SK-N-SH (cell line): ENCODE measurements at regions of chr15 and their contacts with region 1.

Region 1: DNA sequence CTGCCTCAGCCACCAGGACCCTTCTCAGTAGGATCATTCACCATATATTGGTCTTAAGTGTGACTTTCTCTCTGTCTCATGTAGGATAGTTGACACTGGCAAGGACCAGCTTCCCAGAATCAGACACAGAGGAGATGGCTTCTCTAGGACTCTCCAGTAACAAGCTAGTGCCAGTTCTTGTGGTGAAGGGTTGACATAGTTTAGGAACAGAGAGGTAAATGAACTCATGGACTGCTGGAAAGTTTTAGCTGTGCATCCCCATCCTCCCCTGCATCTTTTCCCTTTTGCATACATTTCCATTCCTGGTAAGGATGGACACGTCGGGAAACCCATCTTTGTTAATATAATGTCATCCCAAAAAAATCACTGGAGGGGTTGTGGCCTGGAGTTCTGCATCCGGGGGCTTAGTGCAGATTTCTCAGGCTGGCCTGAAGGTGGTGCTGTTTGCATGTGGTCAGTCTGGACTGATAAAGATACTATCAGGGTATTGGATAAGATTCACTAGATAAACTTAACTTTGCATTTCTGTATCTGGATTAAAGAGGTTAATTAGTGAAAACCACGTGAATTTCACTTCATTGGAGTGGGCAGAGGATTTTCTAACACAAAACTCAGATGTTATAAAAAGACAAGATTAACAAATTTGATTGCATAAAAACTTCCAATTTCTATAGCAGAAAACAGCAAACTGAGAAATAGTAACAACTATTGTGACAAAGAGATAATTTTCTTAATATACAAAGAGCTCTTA is 110.8 kb downstream of the TBC1D2B start:
- DNase-seq: peak; percentile 78
- H3K4me3 ChIP-seq: no peak overlapping the region; a peak in 1 of 4 replicates
- H3K27ac ChIP-seq: no peak overlapping the region
- H3K4me1 ChIP-seq: no peaks in the 10 kb centered on the region; a peak in 1 of 4 replicates
- H3K27me3 ChIP-seq: no peaks in the 10 kb centered on the region; the same call in 1 of the 2 replicates
- CTCF ChIP-seq: peak; percentile 94
- EP300 ChIP-seq: no peak
- RAD21 ChIP-seq: peak; percentile 96

Region 2: DNA sequence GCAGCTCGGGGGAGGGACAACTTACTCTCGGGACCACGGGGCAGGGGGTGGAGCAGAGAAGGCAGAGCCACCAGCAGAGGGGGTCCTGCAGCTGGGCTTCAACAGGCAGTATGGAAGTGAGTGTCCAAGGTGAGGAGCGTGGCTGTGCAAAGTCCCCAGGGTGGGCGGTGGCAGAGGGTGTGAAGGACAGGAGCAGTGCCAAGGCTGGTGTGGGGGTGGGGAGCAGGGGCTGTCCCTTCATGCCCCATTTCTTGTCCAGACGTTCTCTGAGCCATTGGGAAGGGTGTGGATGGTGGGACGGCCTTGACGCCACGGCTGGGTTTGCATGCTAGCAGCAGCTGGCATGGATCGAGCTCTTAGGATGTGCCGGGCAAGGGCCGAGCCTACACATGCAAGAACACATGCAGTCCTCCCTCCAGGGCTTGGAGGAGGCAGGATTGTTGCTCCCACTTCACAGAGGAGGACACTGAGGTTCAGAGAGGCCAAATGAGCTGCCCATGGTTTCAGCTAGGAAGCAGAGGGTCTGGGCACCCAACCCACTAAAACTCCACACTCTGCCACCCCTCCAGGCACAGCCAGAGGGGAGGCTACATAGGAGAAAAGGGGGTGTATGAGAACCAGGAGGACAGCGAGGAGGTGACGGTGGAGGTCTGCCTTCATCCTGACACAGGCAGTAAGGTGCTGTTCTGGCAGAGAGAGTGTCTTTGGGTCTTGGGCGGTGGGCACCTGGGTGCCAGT is 17.2 kb after region 1 on chr15:
- CTCF ChIA-PET with region 1: interaction called, 10 read pairs
- POLR2A ChIA-PET with region 1: no interaction called
- DNase-seq: no peak
- H3K4me3 ChIP-seq: no peak overlapping the region
- H3K27ac ChIP-seq: no peak overlapping the region
- H3K4me1 ChIP-seq: peaks cover 0 to 43% of the 10 kb centered on the region in 2 experiments; a peak in 1 of 4 replicates
- H3K27me3 ChIP-seq: no peaks in the 10 kb centered on the region
- CTCF ChIP-seq: no peak
- EP300 ChIP-seq: no peak
- RAD21 ChIP-seq: peak; percentile 43

Region 3: DNA sequence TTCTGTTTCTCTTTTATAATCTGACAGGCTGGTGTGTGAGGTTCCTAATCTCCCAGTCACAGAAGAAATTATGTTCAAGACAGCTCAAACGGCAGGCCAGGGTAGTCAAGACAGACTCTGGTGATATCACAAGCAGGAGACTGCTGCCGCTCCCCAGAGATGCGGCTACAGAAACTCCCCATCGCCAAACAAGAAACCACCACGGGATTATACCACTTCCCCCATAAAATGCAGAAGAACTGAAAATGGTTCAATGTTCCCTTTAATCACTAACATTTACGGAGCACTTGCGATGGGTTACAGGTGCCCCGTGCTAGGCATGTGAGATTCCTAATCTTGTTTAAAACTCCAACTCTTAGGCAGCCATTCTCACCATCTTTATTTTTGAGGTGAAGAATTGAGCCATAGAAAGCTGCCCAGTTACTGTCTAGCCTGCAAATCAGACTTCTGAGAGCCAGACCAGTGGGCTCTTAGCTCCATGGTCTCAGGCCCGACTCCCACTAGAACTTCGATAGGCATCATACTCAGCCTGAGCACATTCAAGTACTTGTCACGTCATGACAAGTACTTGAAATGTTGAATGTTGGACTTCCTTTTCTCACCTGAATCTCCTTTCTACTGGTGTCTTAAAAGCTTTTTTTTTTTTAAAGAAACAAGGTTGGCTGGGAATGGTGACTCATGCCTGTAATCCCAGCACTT is 52.4 kb after region 1 on chr15:
- CTCF ChIA-PET with region 1: interaction called, 10 read pairs
- POLR2A ChIA-PET with region 1: no interaction called
- DNase-seq: no peak
- H3K4me3 ChIP-seq: no peak overlapping the region
- H3K27ac ChIP-seq: no peak overlapping the region
- H3K4me1 ChIP-seq: peaks cover 0 to 14% of the 10 kb centered on the region in 2 experiments; a peak in 2 of 4 replicates
- H3K27me3 ChIP-seq: no peaks in the 10 kb centered on the region
- CTCF ChIP-seq: no peak
- EP300 ChIP-seq: no peak
- RAD21 ChIP-seq: no peak

Region 4: DNA sequence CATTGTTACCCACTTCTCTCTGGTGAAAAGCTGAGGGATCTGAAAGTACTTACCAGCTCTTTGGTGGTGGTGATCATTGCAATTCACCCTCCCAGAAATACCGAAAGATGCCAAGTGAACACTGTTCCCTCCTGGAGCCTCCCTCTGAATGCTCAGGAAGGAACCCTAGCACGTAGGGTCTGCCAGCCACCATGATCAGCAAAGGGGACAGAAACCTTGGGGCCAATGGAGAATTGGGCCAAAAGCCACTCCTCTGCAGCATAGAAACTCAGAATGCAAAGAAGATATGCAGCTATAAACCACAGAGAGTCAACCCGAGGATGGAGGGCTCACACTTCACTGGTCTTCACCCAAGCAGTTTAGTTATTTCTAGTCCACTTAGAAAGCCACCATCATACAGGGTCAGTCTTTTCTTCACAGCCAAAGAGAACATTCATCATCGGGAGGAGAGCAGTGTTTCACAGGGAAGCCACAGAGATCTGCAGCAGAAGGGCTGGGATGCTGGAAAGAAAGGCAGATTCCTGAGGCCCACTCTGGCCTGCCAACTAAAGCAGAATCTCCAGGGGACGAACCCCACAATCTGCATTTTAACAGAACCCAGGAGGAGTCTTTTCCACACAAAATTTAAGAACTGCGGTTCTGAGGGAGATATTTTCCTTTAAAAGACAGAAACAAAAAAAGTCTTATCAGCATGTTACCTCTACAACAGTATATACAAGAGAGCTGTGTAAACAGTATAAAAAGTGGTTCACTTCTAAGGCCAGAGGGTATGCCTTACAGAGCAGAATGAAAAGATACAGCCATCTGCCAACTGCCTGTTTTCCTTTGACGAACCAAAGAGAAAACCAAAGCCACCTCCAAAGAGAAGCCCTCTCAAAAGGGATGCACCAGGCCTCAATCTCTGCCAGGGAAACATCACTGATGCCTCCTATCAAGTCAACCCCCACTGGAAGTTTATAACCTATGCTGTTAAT is 99.5 kb after region 1 on chr15:
- CTCF ChIA-PET with region 1: interaction called, 22 read pairs
- POLR2A ChIA-PET with region 1: no interaction called
- DNase-seq: no peak
- H3K4me3 ChIP-seq: no peak overlapping the region
- H3K27ac ChIP-seq: peak overlapping the region; percentile 87 to 99
- H3K4me1 ChIP-seq: peaks cover 69 to 77% of the 10 kb centered on the region in 2 experiments
- H3K27me3 ChIP-seq: no peaks in the 10 kb centered on the region
- CTCF ChIP-seq: no peak
- EP300 ChIP-seq: no peak
- RAD21 ChIP-seq: no peak

Region 5: DNA sequence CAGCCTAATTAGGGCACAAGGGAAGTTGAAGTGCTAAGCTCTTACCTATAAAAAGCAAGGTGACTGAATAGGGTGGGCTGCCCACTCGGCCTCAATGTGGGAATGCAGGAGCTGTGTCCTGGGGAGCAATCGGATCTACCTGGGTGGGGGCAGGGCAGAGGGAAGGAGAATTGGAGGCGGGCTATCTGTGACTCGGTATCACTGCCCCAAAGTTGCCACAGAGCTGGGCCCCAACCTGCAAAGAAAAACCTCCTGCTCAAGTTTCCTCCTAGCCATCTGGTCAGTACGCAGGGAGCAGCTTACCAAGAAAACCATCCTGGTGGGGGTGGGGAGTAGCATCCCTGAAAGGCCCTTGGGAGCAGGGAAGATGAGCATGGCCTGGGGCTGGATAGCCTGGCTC is 153.8 kb after region 1 on chr15:
- CTCF ChIA-PET with region 1: interaction called, 11 read pairs
- POLR2A ChIA-PET with region 1: no interaction called
- DNase-seq: no peak
- H3K4me3 ChIP-seq: no peak overlapping the region
- H3K27ac ChIP-seq: no peak overlapping the region
- H3K4me1 ChIP-seq: no peaks in the 10 kb centered on the region
- H3K27me3 ChIP-seq: no peaks in the 10 kb centered on the region
- CTCF ChIP-seq: no peak
- EP300 ChIP-seq: no peak
- RAD21 ChIP-seq: no peak

Region 6: GRCh38 chr15:78315686-78316282 is 349.1 kb after region 1 on chr15:
- CTCF ChIA-PET with region 1: no interaction called
- POLR2A ChIA-PET with region 1: no interaction called
- DNase-seq: peak; percentile 62
- H3K4me3 ChIP-seq: no peak overlapping the region
- H3K27ac ChIP-seq: peak overlapping the region in 1 of 2 experiments; percentile 63; a peak in 2 of 4 replicates
- H3K4me1 ChIP-seq: peaks cover 0 to 16% of the 10 kb centered on the region in 2 experiments; a peak in 1 of 4 replicates
- H3K27me3 ChIP-seq: no peaks in the 10 kb centered on the region
- CTCF ChIP-seq: peak; percentile 38
- EP300 ChIP-seq: no peak
- RAD21 ChIP-seq: peak; percentile 69